Esophagus squamous epithelium (tissue), 5 donors: ENCODE measurements at regions of chr5 and their contacts with region 1.

Region 1: GRCh38 chr5:171207256-171207847 is 101.7 kb upstream of the TLX3 start:
- DNase-seq: no peak
- H3K4me3 ChIP-seq: no peak overlapping the region
- H3K27ac ChIP-seq: no peak overlapping the region
- H3K4me1 ChIP-seq: no peaks in the 10 kb centered on the region
- H3K27me3 ChIP-seq: no peaks in the 10 kb centered on the region
- CTCF ChIP-seq: peak in 4 of 6 experiments; percentile 27 to 49 (median 42)
- POLR2A ChIP-seq: no peak

Region 2: GRCh38 chr5:171102877-171103610 is 104.3 kb before region 1 on chr5:
- intact Hi-C with region 1: no loop called
- DNase-seq: no peak
- H3K4me3 ChIP-seq: no peak overlapping the region
- H3K27ac ChIP-seq: no peak overlapping the region
- H3K4me1 ChIP-seq: no peaks in the 10 kb centered on the region
- H3K27me3 ChIP-seq: no peaks in the 10 kb centered on the region
- CTCF ChIP-seq: no peak
- POLR2A ChIP-seq: no peak

Region 3: GRCh38 chr5:171336521-171337209 is 129.3 kb after region 1 on chr5:
- intact Hi-C with region 1: loop called (anchors 10 kb)
- DNase-seq: no peak
- H3K4me3 ChIP-seq: peak overlapping the region in 3 of 4 donors; percentile 7 to 59 (median 39)
- H3K27ac ChIP-seq: no peak overlapping the region
- H3K4me1 ChIP-seq: peaks cover 0 to 11% (median 0%) of the 10 kb centered on the region in 3 donors
- H3K27me3 ChIP-seq: peaks cover 0 to 86% (median 0%) of the 10 kb centered on the region in 4 donors
- CTCF ChIP-seq: peak in 4 of 6 experiments; percentile 24 to 39 (median 34)
- POLR2A ChIP-seq: no peak